IMR-90 (cell line): ENCODE measurements at regions of chr1 and their contacts with region 1.

Region 1: DNA sequence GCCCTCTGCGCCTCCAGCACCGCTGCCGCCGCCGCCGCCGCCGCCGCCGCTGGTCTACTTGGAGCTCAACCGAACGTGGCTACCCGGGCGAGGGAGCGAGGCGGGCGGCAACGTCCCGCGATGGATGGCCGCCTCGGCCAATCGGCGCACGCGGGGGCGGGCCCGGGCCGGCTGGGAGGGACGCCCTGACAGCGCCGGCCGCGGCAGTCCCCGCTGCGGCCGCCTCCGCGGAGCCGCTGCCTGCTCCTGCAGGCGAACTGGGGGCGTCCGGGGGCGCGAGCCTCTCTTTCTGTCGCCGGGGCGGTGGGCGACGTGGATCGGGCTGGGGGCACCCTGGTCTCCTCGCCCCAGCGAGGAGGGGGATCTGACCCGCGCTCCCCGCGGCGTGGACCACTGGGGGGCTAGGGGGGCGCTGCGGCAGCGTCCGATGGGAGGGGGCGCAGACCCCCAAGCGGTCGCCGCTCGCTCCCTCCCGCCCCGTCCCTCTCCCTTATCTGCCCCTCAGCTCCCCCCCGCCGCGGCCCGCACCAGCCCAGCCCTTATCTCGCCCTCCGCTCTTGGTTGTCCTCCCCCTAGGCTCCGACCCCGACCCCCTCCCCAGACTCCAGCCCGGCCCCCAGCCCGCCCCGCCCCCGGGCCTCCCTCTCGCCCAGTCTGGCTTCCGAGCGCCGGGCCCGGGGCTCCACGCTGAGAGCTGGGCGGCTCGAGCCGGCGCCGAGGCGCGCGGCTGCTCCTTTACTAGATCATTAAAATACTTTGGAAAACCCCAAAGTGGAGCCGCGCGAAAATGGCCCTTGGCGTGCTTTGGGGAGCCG is at the start of gene SSBP3:
- DNase-seq: peak; percentile 88
- ATAC-seq: peak; percentile 92
- H3K4me3 ChIP-seq: peak within 1 kb of the TSS; percentile 92
- H3K27ac ChIP-seq: peak within 1 kb of the TSS; percentile 94
- H3K4me1 ChIP-seq: peaks cover 22% of the 10 kb centered on the region
- H3K27me3 ChIP-seq: no peaks in the 10 kb centered on the region
- CTCF ChIP-seq: no peak
- POLR2A ChIP-seq: peak; percentile 44; the same call in 1 of the 2 replicates
- RAD21 ChIP-seq: peak; percentile 3; the same call in 1 of the 2 replicates
- total RNA-seq, gene SSBP3: 9.7 and 10.9 TPM in 2 replicates

Region 2: DNA sequence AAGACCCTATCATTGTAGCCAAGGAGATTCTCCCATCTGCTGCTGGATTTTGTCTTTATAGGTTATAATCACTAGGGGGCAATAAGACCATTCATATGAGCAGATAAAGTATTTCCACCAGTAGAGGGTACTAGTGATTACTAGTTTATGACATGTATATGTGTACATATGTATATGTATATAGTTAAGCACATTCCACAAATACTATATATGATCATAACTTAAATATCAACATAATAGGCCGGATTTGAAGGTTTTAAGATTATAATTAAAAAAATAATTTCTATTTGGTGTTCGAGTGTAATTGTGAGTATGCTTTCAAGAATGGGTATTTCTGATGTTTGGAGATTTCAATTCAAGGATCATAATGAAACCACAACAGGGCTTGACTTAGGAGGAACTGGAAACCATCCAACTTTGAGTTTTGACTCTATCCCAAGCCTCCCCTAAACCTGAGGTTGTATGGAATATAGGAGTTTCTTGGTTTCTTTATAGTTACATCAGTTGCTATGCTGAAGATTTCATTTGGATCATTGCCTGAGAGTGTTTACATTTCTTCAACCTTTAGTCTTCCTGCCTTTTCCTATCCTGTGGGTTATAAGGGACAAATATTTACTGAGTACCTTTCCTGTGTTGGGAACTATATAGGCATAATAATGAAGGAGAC is 336.2 kb before region 1 on chr1:
- CTCF ChIA-PET with region 1: no interaction called
- POLR2A ChIA-PET with region 1: no interaction called
- dilution Hi-C with region 1: no loop called
- in situ Hi-C with region 1: no loop called
- intact Hi-C with region 1: loop called (anchors 2 kb)
- DNase-seq: peak; percentile 67
- ATAC-seq: peak; percentile 97
- H3K4me3 ChIP-seq: no peak overlapping the region
- H3K27ac ChIP-seq: no peak overlapping the region
- H3K4me1 ChIP-seq: peaks cover 3% of the 10 kb centered on the region; the same call in 1 of the 2 replicates
- H3K27me3 ChIP-seq: no peaks in the 10 kb centered on the region
- CTCF ChIP-seq: peak; percentile 99
- POLR2A ChIP-seq: no peak
- RAD21 ChIP-seq: peak; percentile 88

Region 3: GRCh38 chr1:54227091-54227602 is 179.4 kb before region 1 on chr1:
- CTCF ChIA-PET with region 1: no interaction called
- POLR2A ChIA-PET with region 1: no interaction called
- dilution Hi-C with region 1: no loop called
- in situ Hi-C with region 1: no loop called
- intact Hi-C with region 1: loop called (anchors 10 kb)
- DNase-seq: peak; percentile 51
- ATAC-seq: peak; percentile 72
- H3K4me3 ChIP-seq: no peak overlapping the region
- H3K27ac ChIP-seq: no peak overlapping the region
- H3K4me1 ChIP-seq: peaks cover 22% of the 10 kb centered on the region
- H3K27me3 ChIP-seq: no peaks in the 10 kb centered on the region
- CTCF ChIP-seq: no peak
- POLR2A ChIP-seq: no peak
- RAD21 ChIP-seq: no peak

Region 4: DNA sequence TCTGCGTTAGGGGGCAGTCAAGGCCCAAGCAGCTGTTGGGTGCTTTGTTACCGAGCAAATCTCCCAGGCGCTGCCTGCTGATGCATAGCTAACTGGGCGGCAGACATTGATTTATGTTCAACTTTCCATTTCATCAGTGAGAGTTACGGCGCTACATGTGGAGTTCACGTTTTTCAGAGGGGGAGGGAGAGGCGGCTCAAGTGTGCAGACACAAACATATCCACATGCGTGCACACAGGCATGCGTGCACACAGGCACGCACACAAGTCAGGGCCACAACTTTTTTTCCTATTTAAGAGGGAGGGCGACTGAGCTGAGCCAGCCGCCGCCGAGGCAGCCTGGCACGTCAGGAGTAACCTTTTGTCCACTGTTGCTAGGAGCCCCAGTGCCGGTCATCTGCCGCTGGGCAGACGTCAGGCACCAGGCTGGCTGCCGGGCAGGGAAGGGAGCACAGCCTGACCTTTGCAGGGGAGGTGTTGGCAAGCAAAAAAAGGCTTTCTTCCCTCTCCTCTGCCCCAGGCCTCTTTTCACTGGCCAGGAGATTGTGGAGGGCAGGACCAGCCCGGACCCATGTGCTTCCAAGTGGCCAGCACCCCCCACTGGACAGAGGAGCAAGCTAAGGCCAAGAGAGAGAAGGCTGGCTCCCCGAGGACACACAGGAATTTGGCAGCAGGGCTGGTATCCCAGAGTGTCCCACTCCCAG is 133.3 kb before region 1 on chr1:
- CTCF ChIA-PET with region 1: interaction called, 3 read pairs
- POLR2A ChIA-PET with region 1: no interaction called
- dilution Hi-C with region 1: no loop called
- in situ Hi-C with region 1: no loop called
- intact Hi-C with region 1: loop called (anchors 1 kb)
- DNase-seq: peak; percentile 93
- ATAC-seq: peak; percentile 81
- H3K4me3 ChIP-seq: peak overlapping the region; percentile 7; the same call in 1 of the 2 replicates
- H3K27ac ChIP-seq: peak overlapping the region; percentile 63
- H3K4me1 ChIP-seq: peaks cover 51% of the 10 kb centered on the region
- H3K27me3 ChIP-seq: no peaks in the 10 kb centered on the region
- CTCF ChIP-seq: peak; percentile 87
- POLR2A ChIP-seq: peak; percentile 13
- RAD21 ChIP-seq: peak; percentile 89

Region 5: GRCh38 chr1:54327386-54328065 is 79.0 kb before region 1 on chr1:
- CTCF ChIA-PET with region 1: no interaction called
- POLR2A ChIA-PET with region 1: no interaction called
- dilution Hi-C with region 1: no loop called
- in situ Hi-C with region 1: no loop called
- intact Hi-C with region 1: loop called (anchors 2 kb)
- DNase-seq: peak; percentile 63
- ATAC-seq: no peak; the same call in 1 of the 2 replicates
- H3K4me3 ChIP-seq: no peak overlapping the region
- H3K27ac ChIP-seq: peak overlapping the region; percentile 92; the same call in 1 of the 2 replicates
- H3K4me1 ChIP-seq: peaks cover 67% of the 10 kb centered on the region
- H3K27me3 ChIP-seq: no peaks in the 10 kb centered on the region
- CTCF ChIP-seq: no peak
- POLR2A ChIP-seq: no peak
- RAD21 ChIP-seq: peak; percentile 6; the same call in 1 of the 2 replicates

Region 6: GRCh38 chr1:54359393-54360162 is 47.0 kb before region 1 on chr1:
- CTCF ChIA-PET with region 1: no interaction called
- POLR2A ChIA-PET with region 1: no interaction called
- dilution Hi-C with region 1: no loop called
- in situ Hi-C with region 1: no loop called
- intact Hi-C with region 1: no loop called
- DNase-seq: no peak
- ATAC-seq: no peak
- H3K4me3 ChIP-seq: no peak overlapping the region
- H3K27ac ChIP-seq: no peak overlapping the region
- H3K4me1 ChIP-seq: peaks cover 11% of the 10 kb centered on the region
- H3K27me3 ChIP-seq: no peaks in the 10 kb centered on the region
- CTCF ChIP-seq: no peak
- POLR2A ChIP-seq: no peak
- RAD21 ChIP-seq: no peak

Region 7: GRCh38 chr1:54955359-54955758 is 548.8 kb after region 1 on chr1:
- CTCF ChIA-PET with region 1: no interaction called
- POLR2A ChIA-PET with region 1: no interaction called
- dilution Hi-C with region 1: no loop called
- in situ Hi-C with region 1: no loop called
- intact Hi-C with region 1: no loop called
- DNase-seq: peak; percentile 48
- ATAC-seq: no peak
- H3K4me3 ChIP-seq: no peak overlapping the region
- H3K27ac ChIP-seq: no peak overlapping the region
- H3K4me1 ChIP-seq: peaks cover 6% of the 10 kb centered on the region
- H3K27me3 ChIP-seq: no peaks in the 10 kb centered on the region
- CTCF ChIP-seq: no peak
- POLR2A ChIP-seq: no peak
- RAD21 ChIP-seq: no peak